CD14-positive monocyte (primary cell): ENCODE measurements at regions of chr1 and their contacts with region 1.

Region 1: DNA sequence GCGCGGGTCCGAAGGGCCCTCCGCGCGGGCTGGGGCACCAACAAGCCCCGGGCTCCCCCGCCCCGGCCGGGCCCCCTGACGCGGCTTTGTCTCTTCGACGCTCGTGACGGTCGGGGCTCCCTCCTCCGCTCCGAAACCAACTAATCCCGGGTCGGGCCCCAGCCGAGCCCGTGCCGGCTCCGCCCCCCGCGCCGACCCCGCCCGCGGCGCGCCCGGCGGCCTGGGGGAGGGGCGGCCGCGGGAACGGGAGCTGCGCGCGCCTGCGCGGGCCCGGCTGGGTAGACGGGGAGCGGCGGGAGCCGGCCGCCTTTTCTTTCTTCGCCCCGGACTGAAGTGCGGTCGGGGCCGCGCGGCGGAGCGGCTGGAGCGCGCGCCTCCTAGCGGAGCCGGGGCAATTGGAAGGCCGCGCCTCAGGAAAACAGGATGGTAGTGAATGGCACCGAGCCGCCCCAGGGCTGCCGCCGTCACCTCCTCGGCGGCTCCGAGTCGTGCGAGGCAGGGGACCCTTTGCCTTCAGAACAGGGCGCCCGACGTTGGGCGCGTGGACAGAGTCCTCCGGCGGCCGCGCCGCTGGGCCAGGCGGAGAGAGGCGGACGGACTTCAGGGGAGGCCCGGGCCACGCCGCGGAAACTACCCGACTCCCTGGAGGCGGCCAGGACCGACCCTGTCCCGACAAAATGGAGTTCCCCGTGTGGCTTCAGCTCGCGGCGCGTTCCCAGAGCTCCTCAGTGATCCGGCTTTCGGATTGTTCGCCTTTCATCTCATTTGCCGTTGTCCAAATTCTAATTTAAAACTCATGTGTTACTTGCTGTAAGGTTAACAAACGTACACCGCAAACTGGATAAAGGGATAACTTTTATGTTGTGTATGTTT is at the start of gene TP53BP2:
- DNase-seq: peak; percentile 87 to 88 (median 88)
- H3K4me3 ChIP-seq: peak within 1 kb of the TSS; percentile 84 to 93 (median 85)
- H3K4me3 Mint-ChIP-seq: peak within 1 kb of the TSS; percentile 95 to 97
- H3K27ac ChIP-seq: peak within 1 kb of the TSS; percentile 95 to 98
- H3K27ac Mint-ChIP-seq: peak within 1 kb of the TSS; percentile 95 to 99 (median 97)
- H3K4me1 ChIP-seq: peaks cover 30 to 39% of the 10 kb centered on the region in 2 donors
- H3K4me1 Mint-ChIP-seq: peaks cover 32% of the 10 kb centered on the region
- H3K27me3 ChIP-seq: no peaks in the 10 kb centered on the region
- H3K27me3 Mint-ChIP-seq: no peaks in the 10 kb centered on the region
- CTCF ChIP-seq: peak; percentile 66
- polyA plus RNA-seq, gene TP53BP2: 5.7 to 19.7 (median 8.8) TPM

Region 2: GRCh38 chr1:223771814-223772770 is 74.0 kb before region 1 on chr1:
- intact Hi-C with region 1: no loop called
- DNase-seq: no peak
- H3K4me3 ChIP-seq: no peak overlapping the region
- H3K4me3 Mint-ChIP-seq: no peak overlapping the region
- H3K27ac ChIP-seq: no peak overlapping the region
- H3K27ac Mint-ChIP-seq: peak overlapping the region in 1 of 7 donors; percentile 1
- H3K4me1 ChIP-seq: no peaks in the 10 kb centered on the region
- H3K4me1 Mint-ChIP-seq: peaks cover 7% of the 10 kb centered on the region
- H3K27me3 ChIP-seq: no peaks in the 10 kb centered on the region
- H3K27me3 Mint-ChIP-seq: peaks cover 0 to 2% (median 0%) of the 10 kb centered on the region in 3 donors
- CTCF ChIP-seq: no peak

Region 3: GRCh38 chr1:223794136-223794880 is 51.7 kb before region 1 on chr1:
- intact Hi-C with region 1: loop called in 1 of 2 experiments (anchors 10 kb)
- DNase-seq: no peak
- H3K4me3 ChIP-seq: no peak overlapping the region
- H3K4me3 Mint-ChIP-seq: no peak overlapping the region
- H3K27ac ChIP-seq: no peak overlapping the region
- H3K27ac Mint-ChIP-seq: no peak overlapping the region
- H3K4me1 ChIP-seq: no peaks in the 10 kb centered on the region
- H3K4me1 Mint-ChIP-seq: peaks cover 3% of the 10 kb centered on the region
- H3K27me3 ChIP-seq: no peaks in the 10 kb centered on the region
- H3K27me3 Mint-ChIP-seq: no peaks in the 10 kb centered on the region
- CTCF ChIP-seq: no peak

Region 4: DNA sequence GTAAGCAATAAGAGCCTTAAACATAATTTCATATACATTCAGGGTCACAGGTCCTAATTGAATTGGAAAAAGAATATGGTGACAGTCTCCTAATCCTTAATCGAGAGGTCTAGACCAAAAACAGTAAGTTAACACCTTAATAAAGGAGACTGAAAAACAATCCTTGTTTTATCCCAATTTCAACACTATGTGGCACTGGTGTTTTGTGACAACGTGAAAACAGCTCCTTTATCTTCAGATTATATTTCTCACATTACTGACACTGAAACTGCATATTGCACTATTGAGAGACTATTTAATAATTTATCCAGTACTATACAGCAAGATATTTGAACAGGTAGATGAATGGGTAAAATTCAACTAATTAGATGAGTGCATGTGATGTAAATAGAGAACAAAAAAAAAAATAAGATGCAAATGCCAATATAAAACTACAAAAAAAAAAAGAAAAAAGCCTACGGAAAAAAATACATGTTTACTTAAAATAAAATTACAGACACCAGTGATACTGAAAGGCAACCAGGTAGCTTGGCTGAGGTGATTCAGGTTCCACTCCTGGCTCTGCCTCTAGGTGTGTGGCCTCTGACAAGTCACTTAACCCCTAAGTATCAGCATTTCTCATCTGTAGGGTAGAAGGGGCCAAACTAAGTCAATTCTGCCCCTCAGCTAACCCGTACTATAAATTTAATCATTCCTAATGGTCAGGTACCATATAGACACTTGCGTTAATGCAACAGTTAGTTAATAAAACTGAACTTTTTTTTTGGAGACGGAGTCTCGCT is 34.2 kb before region 1 on chr1:
- intact Hi-C with region 1: loop called in 1 of 2 experiments (anchors 2 kb)
- DNase-seq: peak in 2 of 3 donors; percentile 40 to 58
- H3K4me3 ChIP-seq: no peak overlapping the region
- H3K4me3 Mint-ChIP-seq: no peak overlapping the region
- H3K27ac ChIP-seq: no peak overlapping the region
- H3K27ac Mint-ChIP-seq: peak overlapping the region in 3 of 7 donors; percentile 8 to 62 (median 46)
- H3K4me1 ChIP-seq: no peaks in the 10 kb centered on the region
- H3K4me1 Mint-ChIP-seq: no peaks in the 10 kb centered on the region
- H3K27me3 ChIP-seq: no peaks in the 10 kb centered on the region
- H3K27me3 Mint-ChIP-seq: peaks cover 0 to 3% (median 0%) of the 10 kb centered on the region in 3 donors
- CTCF ChIP-seq: peak; percentile 66

Region 5: DNA sequence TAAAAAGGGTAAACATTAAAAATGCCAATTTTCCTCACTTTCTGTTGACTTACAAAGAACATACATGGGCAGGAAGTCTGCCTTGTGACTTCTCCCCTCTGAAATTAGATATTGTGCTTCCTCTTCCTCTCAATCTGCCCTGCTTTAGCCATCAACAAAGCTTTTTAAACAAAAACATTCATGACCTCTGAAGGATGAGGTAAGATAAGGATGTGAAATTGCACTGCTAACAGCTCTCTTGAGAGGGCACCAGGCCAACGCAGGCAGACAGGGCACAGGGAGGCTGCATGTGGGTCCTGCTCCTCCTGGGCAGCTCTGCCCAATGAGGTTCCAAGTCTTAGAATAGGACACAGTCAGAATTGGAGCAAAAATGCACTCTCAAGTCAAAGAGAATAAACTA is 399.1 kb after region 1 on chr1:
- intact Hi-C with region 1: no loop called
- DNase-seq: peak; percentile 60 to 64 (median 62)
- H3K4me3 ChIP-seq: peak overlapping the region in 1 of 3 experiments; percentile 38
- H3K4me3 Mint-ChIP-seq: peak overlapping the region in 1 of 2 donors; percentile 7
- H3K27ac ChIP-seq: peak overlapping the region; percentile 80 to 84
- H3K27ac Mint-ChIP-seq: peak overlapping the region; percentile 84 to 96 (median 93)
- H3K4me1 ChIP-seq: peaks cover 17 to 22% of the 10 kb centered on the region in 2 donors
- H3K4me1 Mint-ChIP-seq: peaks cover 16% of the 10 kb centered on the region
- H3K27me3 ChIP-seq: no peaks in the 10 kb centered on the region
- H3K27me3 Mint-ChIP-seq: no peaks in the 10 kb centered on the region
- CTCF ChIP-seq: no peak